Left cardiac atrium (tissue), 4 donors: ENCODE measurements at regions of chr1 and their contacts with region 1.

Region 1: DNA sequence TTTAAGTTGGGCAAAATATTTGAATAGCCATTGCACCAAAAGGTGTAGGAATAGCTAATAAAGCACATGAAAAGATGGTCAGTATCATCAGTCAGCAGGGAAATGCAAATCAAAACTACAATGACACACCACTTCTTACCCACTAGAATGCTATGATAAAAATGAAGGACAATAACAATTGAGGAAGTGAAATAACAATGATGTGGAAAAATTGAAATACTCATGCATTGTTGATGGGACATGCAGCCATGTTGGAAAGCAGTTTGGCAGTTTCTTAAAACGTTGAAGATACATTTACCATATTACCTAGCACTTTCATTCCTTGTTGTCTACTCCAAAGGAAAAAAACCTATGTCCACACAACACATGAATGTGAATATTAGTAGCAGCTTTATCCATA is 28.4 kb downstream of the HSD3B1 start:
- DNase-seq: no peak
- ATAC-seq: no peak

Region 2: GRCh38 chr1:119549719-119550132 is 14.3 kb after region 1 on chr1:
- intact Hi-C with region 1: loop called in 1 of 2 experiments (anchors 2 kb)
- DNase-seq: peak; percentile 36
- ATAC-seq: peak; percentile 73 to 80